ENCODE measurements at regions of chr10 and their contacts with region 1.

Region 1: GRCh38 chr10:68331455-68332258 is at the start of gene HNRNPH3:
- DNase-seq: peak; percentile 98
- ATAC-seq: peak; percentile 86
- H3K4me3 Mint-ChIP-seq: peak within 1 kb of the TSS; percentile 99
- H3K27ac Mint-ChIP-seq: peak within 1 kb of the TSS; percentile 99
- H3K4me1 Mint-ChIP-seq: peaks cover 67% of the 10 kb centered on the region
- H3K27me3 Mint-ChIP-seq: no peaks in the 10 kb centered on the region
- CTCF ChIP-seq: no peak
- total RNA-seq, gene HNRNPH3: 101 and 113 TPM in 2 replicates

Region 2: GRCh38 chr10:67772894-67773511 is 558.7 kb before region 1 on chr10:
- CTCF ChIA-PET with region 1: no interaction called
- POLR2A ChIA-PET with region 1: interaction called, 12 read pairs
- intact Hi-C with region 1: no loop called
- DNase-seq: no peak
- ATAC-seq: peak; percentile 90
- H3K4me3 Mint-ChIP-seq: peak overlapping the region; percentile 47
- H3K27ac Mint-ChIP-seq: peak overlapping the region; percentile 90
- H3K4me1 Mint-ChIP-seq: peaks cover 50% of the 10 kb centered on the region
- H3K27me3 Mint-ChIP-seq: no peaks in the 10 kb centered on the region
- CTCF ChIP-seq: no peak

Region 3: GRCh38 chr10:68074775-68075549 is 256.7 kb before region 1 on chr10 and contains the start of gene HERC4:
- CTCF ChIA-PET with region 1: no interaction called
- POLR2A ChIA-PET with region 1: interaction called, 12 read pairs
- intact Hi-C with region 1: loop called (anchors 1 kb)
- DNase-seq: peak; percentile 91
- ATAC-seq: peak; percentile 92
- H3K4me3 Mint-ChIP-seq: peak within 1 kb of the TSS; percentile 97
- H3K27ac Mint-ChIP-seq: peak within 1 kb of the TSS; percentile 97
- H3K4me1 Mint-ChIP-seq: peaks cover 39% of the 10 kb centered on the region
- H3K27me3 Mint-ChIP-seq: no peaks in the 10 kb centered on the region
- CTCF ChIP-seq: no peak
- total RNA-seq, gene HERC4: 65.3 and 84.2 TPM in 2 replicates

Region 4: GRCh38 chr10:68342909-68343516 is 11.4 kb after region 1 on chr10:
- CTCF ChIA-PET with region 1: interaction called, 3 read pairs
- POLR2A ChIA-PET with region 1: interaction called, 18 read pairs
- intact Hi-C with region 1: loop called (anchors 1 kb)
- DNase-seq: no peak
- ATAC-seq: no peak
- H3K4me3 Mint-ChIP-seq: no peak overlapping the region
- H3K27ac Mint-ChIP-seq: no peak overlapping the region
- H3K4me1 Mint-ChIP-seq: no peaks in the 10 kb centered on the region
- H3K27me3 Mint-ChIP-seq: no peaks in the 10 kb centered on the region
- CTCF ChIP-seq: no peak

Region 5: GRCh38 chr10:68471586-68472408 is 140.1 kb after region 1 on chr10 and contains the start of gene DNA2:
- CTCF ChIA-PET with region 1: no interaction called
- POLR2A ChIA-PET with region 1: interaction called, 10 read pairs
- intact Hi-C with region 1: no loop called
- DNase-seq: peak; percentile 73
- ATAC-seq: peak; percentile 91
- H3K4me3 Mint-ChIP-seq: peak within 1 kb of the TSS; percentile 99
- H3K27ac Mint-ChIP-seq: peak within 1 kb of the TSS; percentile 88
- H3K4me1 Mint-ChIP-seq: peaks cover 18% of the 10 kb centered on the region
- H3K27me3 Mint-ChIP-seq: no peaks in the 10 kb centered on the region
- CTCF ChIP-seq: no peak
- total RNA-seq, gene DNA2: 6.6 and 8.1 TPM in 2 replicates

Region 6: GRCh38 chr10:68501691-68502090 is 170.0 kb after region 1 on chr10:
- CTCF ChIA-PET with region 1: no interaction called
- POLR2A ChIA-PET with region 1: no interaction called
- intact Hi-C with region 1: no loop called
- DNase-seq: no peak
- ATAC-seq: no peak
- H3K4me3 Mint-ChIP-seq: no peak overlapping the region
- H3K27ac Mint-ChIP-seq: no peak overlapping the region
- H3K4me1 Mint-ChIP-seq: no peaks in the 10 kb centered on the region
- H3K27me3 Mint-ChIP-seq: no peaks in the 10 kb centered on the region
- CTCF ChIP-seq: no peak

Region 7: GRCh38 chr10:68901104-68901927 is 569.7 kb after region 1 on chr10 and contains the start of gene DDX50:
- CTCF ChIA-PET with region 1: no interaction called
- POLR2A ChIA-PET with region 1: interaction called, 10 read pairs
- intact Hi-C with region 1: loop called (anchors 1 kb)
- DNase-seq: peak; percentile 92
- ATAC-seq: peak; percentile 96
- H3K4me3 Mint-ChIP-seq: peak within 1 kb of the TSS; percentile 98
- H3K27ac Mint-ChIP-seq: peak within 1 kb of the TSS; percentile 98
- H3K4me1 Mint-ChIP-seq: peaks cover 40% of the 10 kb centered on the region
- H3K27me3 Mint-ChIP-seq: no peaks in the 10 kb centered on the region
- CTCF ChIP-seq: no peak
- total RNA-seq, gene DDX50: 36.3 and 41.7 TPM in 2 replicates

Region 8: GRCh38 chr10:69123747-69124562 is 792.3 kb after region 1 on chr10 and contains the start of gene VPS26A:
- CTCF ChIA-PET with region 1: no interaction called
- POLR2A ChIA-PET with region 1: no interaction called
- intact Hi-C with region 1: loop called (anchors 1 kb)
- DNase-seq: peak; percentile 100
- ATAC-seq: peak; percentile 94
- H3K4me3 Mint-ChIP-seq: peak within 1 kb of the TSS; percentile 93
- H3K27ac Mint-ChIP-seq: peak within 1 kb of the TSS; percentile 98
- H3K4me1 Mint-ChIP-seq: peaks cover 25% of the 10 kb centered on the region
- H3K27me3 Mint-ChIP-seq: no peaks in the 10 kb centered on the region
- CTCF ChIP-seq: no peak
- total RNA-seq, gene VPS26A: 25.9 and 29.5 TPM in 2 replicates